HCT116 (cell line): ENCODE measurements at regions of chr16 and their contacts with region 1.

Region 1: DNA sequence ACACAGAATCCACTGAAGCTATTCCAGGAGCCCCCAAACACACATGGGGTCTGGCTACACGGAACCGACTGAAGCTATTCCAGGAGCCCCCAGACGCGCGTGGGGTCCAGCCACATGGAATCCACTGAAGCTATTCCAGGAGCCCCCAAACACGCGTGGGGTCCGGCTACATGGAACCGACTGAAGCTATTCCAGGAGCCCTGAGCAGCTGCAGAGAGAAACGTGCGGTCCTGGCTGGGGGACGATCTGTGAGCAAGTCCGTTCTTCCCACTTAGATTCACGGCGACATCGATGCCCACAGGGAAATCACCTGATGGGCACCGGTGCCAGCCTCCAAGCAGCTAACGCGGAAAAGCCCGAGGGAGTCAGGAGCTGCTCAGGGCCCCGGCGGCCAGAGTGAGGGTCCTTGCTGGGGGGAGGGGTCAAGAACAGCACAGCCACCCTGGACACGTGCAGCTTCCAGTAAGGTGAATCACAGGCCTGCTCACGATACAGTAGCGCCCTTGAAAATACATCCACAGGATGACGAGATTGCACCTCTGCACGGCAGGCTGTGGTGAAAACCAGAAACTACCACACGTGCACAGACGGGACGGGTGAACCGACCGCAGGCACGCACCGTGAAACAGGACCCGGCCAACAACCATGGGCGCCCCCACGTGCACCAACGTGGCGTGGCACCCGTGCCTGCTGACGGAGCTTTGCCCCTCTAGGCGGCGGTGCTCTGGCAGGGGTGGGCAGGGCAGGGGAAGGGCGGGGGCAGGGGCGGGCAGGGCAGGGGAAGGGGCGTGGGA is 77.7 kb upstream of the GNG13 start:
- DNase-seq: peak; percentile 44
- ATAC-seq: peak; percentile 97
- H3K4me3 ChIP-seq: no peak overlapping the region
- H3K27ac ChIP-seq: no peak overlapping the region
- H3K4me1 ChIP-seq: peaks cover 5 to 15% of the 10 kb centered on the region in 2 experiments; a peak in 3 of 4 replicates
- H3K27me3 ChIP-seq: no peaks in the 10 kb centered on the region
- CTCF ChIP-seq: peak; percentile 54 to 88 (median 67)
- POLR2A ChIP-seq: no peak
- RAD21 ChIP-seq: no peak; the same call in none of the 2 replicates

Region 2: GRCh38 chr16:554640-555365 is 323.4 kb before region 1 on chr16:
- CTCF ChIA-PET with region 1: no interaction called
- POLR2A ChIA-PET with region 1: no interaction called
- RAD21 ChIA-PET with region 1: no interaction called
- intact Hi-C with region 1: no loop called
- DNase-seq: no peak
- ATAC-seq: no peak; the same call in 1 of the 2 replicates
- H3K4me3 ChIP-seq: no peak overlapping the region
- H3K27ac ChIP-seq: no peak overlapping the region
- H3K4me1 ChIP-seq: no peaks in the 10 kb centered on the region
- H3K27me3 ChIP-seq: no peaks in the 10 kb centered on the region
- CTCF ChIP-seq: no peak
- POLR2A ChIP-seq: no peak
- RAD21 ChIP-seq: no peak

Region 3: DNA sequence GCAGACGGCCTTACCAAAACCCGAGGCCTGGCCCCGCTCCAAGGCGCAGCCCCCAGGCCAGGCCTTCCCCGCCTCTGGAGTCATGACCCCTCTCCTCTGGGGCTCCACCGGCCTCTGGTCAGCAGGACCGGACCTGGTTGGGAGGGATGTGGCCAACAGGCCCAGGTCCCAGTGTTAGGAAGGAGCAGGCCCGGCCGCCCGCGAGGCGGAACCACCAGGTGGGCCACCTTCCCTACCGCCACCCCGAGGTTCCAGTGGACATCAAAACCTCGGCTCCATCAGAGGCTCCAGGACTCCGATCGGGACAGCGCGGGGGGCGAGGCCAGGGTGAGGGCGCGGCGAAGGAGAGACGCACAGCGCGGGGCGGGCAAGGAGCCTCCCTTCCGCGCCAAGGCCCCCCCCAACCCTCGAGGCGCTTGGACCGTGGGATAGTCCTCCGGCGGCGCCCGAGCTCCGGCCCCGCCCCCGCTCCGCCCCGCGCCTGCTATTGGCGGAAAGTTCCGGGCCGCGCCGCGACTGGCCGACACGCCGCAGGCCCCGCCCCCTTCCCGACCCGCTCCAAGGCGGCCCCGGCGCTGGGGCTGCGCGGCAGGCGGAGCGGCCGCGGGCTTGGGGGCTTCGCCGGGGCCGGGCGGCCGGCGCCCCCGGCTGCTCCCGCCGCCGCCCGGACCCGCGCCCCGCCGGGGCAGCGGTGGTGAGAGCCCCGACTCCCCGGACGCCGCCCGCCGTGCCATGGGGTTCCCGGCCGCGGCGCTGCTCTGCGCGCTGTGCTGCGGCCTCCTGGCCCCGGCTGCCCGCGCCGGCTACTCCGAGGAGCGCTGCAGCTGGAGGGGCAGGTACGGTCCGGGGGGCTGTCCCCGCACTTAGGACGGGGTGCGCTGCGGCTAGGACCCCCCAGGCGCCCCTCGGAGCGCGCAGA is 163.4 kb before region 1 on chr16 and contains the start of gene METRN:
- CTCF ChIA-PET with region 1: interaction called, 6 read pairs
- POLR2A ChIA-PET with region 1: no interaction called
- RAD21 ChIA-PET with region 1: no interaction called
- intact Hi-C with region 1: loop called (anchors 5 kb)
- DNase-seq: no peak
- ATAC-seq: peak; percentile 64
- H3K4me3 ChIP-seq: peak within 1 kb of the TSS; percentile 59 to 74
- H3K27ac ChIP-seq: peak within 1 kb of the TSS; percentile 92
- H3K4me1 ChIP-seq: peaks cover 37 to 75% of the 10 kb centered on the region in 2 experiments
- H3K27me3 ChIP-seq: no peaks in the 10 kb centered on the region
- CTCF ChIP-seq: no peak
- POLR2A ChIP-seq: no peak
- RAD21 ChIP-seq: no peak
- total RNA-seq, gene METRN: 193 TPM

Region 4: GRCh38 chr16:813204-813915 is 64.8 kb before region 1 on chr16:
- CTCF ChIA-PET with region 1: no interaction called
- POLR2A ChIA-PET with region 1: no interaction called
- RAD21 ChIA-PET with region 1: no interaction called
- intact Hi-C with region 1: loop called (anchors 1 kb)
- DNase-seq: no peak
- ATAC-seq: peak; percentile 75
- H3K4me3 ChIP-seq: no peak overlapping the region
- H3K27ac ChIP-seq: 0 out of 2 replicates have a peak overlapping the region, but pooled peaks have one; percentile 17
- H3K4me1 ChIP-seq: peaks cover 24 to 35% of the 10 kb centered on the region in 2 experiments
- H3K27me3 ChIP-seq: no peaks in the 10 kb centered on the region
- CTCF ChIP-seq: peak in 2 of 3 experiments; percentile 51 to 62; a peak in 5 of 6 replicates
- POLR2A ChIP-seq: no peak
- RAD21 ChIP-seq: peak; percentile 82

Region 5: DNA sequence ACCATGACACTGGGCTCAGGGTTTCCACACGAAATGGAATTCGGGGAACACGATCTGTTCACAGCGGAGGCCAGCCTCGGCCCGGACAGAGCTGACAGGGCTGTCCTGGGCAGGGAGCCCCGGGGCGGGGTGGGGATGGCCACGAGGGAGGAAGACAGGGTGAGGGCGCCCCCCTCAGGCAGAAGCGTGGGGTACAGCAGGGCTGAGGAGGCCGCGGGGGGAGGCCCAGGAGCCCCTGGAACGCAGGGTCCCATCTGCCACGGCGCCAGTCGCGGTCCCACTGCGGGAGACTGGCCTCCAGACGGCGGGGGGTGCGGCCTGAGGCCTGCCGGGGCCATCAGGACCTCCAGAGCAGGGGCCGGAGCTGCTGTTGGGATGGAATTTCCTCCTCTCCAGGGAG is 16.7 kb after region 1 on chr16:
- CTCF ChIA-PET with region 1: no interaction called
- POLR2A ChIA-PET with region 1: no interaction called
- RAD21 ChIA-PET with region 1: no interaction called
- intact Hi-C with region 1: no loop called
- DNase-seq: no peak
- ATAC-seq: peak; percentile 26; the same call in 1 of the 2 replicates
- H3K4me3 ChIP-seq: no peak overlapping the region
- H3K27ac ChIP-seq: no peak overlapping the region
- H3K4me1 ChIP-seq: peaks cover 0 to 3% of the 10 kb centered on the region in 2 experiments; a peak in 1 of 4 replicates
- H3K27me3 ChIP-seq: no peaks in the 10 kb centered on the region
- CTCF ChIP-seq: peak in 2 of 3 experiments; percentile 15 to 41; a peak in 3 of 6 replicates
- POLR2A ChIP-seq: no peak
- RAD21 ChIP-seq: peak; percentile 24; the same call in 1 of the 2 replicates